ENCODE measurements at regions of chr2 and their contacts with region 1.

Region 1: DNA sequence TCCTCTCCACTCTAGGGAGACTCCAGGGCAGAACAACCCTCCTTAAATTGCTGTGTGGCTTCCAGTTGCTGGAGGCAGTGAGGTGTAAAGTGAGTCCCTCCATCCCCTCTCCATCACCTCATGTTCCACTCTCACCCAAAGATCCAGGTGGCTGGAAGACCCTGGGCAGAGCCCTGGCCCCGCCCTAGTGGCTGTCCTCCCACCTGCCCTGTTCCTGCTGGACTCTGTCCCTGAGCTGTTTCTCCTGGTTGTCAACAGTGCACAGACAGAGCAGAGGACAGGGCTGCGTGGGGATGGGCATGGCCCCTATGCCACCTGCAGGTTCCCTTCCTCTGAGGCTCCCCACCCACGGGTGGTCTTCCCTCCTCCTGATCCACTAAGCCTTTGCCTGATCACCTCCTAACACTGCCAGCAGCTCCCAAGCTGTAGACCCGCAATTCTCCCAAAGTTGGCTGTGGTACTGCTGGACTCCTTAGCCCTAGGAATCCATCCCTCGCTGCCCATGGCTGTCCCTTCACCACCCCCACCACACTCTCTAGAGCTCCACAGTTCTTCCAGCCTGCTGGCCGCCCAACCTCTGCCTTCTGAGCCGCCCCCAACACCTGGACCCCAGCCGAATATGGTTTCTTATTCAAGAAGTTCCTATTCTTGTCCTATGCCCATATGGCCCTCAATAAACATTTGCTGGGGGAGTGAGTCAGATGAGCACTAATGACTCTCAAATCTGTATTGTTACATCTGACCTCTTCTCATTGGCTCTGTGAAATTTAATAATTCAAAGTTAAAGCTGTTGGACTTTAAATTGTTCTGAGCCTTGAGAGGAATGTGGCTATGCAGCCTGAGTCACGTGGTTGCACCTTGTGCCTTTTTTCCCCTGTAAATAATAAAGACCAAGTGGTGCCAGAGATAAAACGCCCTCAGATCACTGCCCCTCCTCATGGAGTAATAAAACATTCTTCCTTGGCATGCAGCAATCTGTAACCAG is 260.0 kb upstream of the HS6ST1 start:
- DNase-seq: no peak
- ATAC-seq: no peak
- H3K4me3 ChIP-seq: no peak overlapping the region
- H3K27ac ChIP-seq: no peak overlapping the region
- H3K4me1 ChIP-seq: no peaks in the 10 kb centered on the region
- H3K27me3 ChIP-seq: no peaks in the 10 kb centered on the region
- CTCF ChIP-seq: no peak
- POLR2A ChIP-seq: no peak

Region 2: GRCh38 chr2:128510696-128511397 is 67.9 kb before region 1 on chr2:
- intact Hi-C with region 1: loop called in 1 of 10 experiments (anchors 2 kb)
- DNase-seq: no peak
- ATAC-seq: no peak
- H3K4me3 ChIP-seq: no peak overlapping the region
- H3K27ac ChIP-seq: no peak overlapping the region
- H3K4me1 ChIP-seq: peaks cover 0 to 21% (median 0%) of the 10 kb centered on the region in 12 donors
- H3K27me3 ChIP-seq: no peaks in the 10 kb centered on the region
- CTCF ChIP-seq: no peak
- POLR2A ChIP-seq: no peak